Natural killer cell (primary cell): ENCODE measurements at regions of chr13 and their contacts with region 1.

Region 1: GRCh38 chr13:41652727-41653361 is 195.5 kb downstream of the RGCC start:
- DNase-seq: peak in 1 of 2 donors; percentile 74
- ATAC-seq: peak in 1 of 3 donors; percentile 34
- H3K4me3 ChIP-seq: no peak overlapping the region
- H3K4me3 Mint-ChIP-seq: no peak overlapping the region
- H3K27ac ChIP-seq: no peak overlapping the region
- H3K27ac Mint-ChIP-seq: no peak overlapping the region
- H3K4me1 ChIP-seq: no peaks in the 10 kb centered on the region
- H3K4me1 Mint-ChIP-seq: no peaks in the 10 kb centered on the region
- H3K27me3 ChIP-seq: no peaks in the 10 kb centered on the region
- H3K27me3 Mint-ChIP-seq: no peaks in the 10 kb centered on the region
- CTCF ChIP-seq: peak; percentile 28

Region 2: GRCh38 chr13:41352935-41353840 is 299.7 kb before region 1 on chr13:
- intact Hi-C with region 1: loop called (anchors 1 kb)
- DNase-seq: peak; percentile 21 to 85
- ATAC-seq: peak; percentile 75 to 80 (median 75)
- H3K4me3 ChIP-seq: no peak overlapping the region
- H3K4me3 Mint-ChIP-seq: peak overlapping the region; percentile 42
- H3K27ac ChIP-seq: no peak overlapping the region
- H3K27ac Mint-ChIP-seq: peak overlapping the region; percentile 35 to 83
- H3K4me1 ChIP-seq: peaks cover 12% of the 10 kb centered on the region
- H3K4me1 Mint-ChIP-seq: peaks cover 30 to 32% of the 10 kb centered on the region in 2 donors
- H3K27me3 ChIP-seq: no peaks in the 10 kb centered on the region
- H3K27me3 Mint-ChIP-seq: no peaks in the 10 kb centered on the region
- CTCF ChIP-seq: peak; percentile 90

Region 3: DNA sequence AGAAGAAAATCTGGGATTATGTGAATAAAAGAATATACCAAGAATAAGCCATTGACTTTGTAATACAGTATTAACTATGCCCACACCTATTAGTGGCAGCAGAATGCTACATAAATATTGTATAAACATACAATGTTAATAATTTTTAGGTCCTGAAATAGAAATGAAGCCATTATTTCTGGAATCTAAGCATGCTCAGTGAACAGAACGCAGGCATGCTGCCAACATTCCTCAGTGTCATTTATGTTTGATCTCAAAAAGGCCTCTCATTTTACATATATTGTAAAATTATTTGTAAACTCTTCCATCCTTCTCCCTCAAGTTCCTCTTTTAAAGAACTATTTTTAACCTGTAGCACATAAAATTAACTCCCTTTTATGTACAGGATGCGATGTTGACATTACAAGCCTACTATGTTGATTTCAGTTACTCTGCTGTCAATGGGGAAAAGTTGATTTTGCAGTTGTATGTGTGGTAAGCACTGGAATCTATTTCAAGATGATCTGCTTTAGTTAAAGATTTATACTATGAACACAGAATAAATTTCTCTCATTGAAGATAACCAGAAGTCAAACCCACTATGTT is 189.3 kb after region 1 on chr13:
- intact Hi-C with region 1: no loop called
- DNase-seq: no peak
- ATAC-seq: no peak
- H3K4me3 ChIP-seq: no peak overlapping the region
- H3K4me3 Mint-ChIP-seq: no peak overlapping the region
- H3K27ac ChIP-seq: no peak overlapping the region
- H3K27ac Mint-ChIP-seq: no peak overlapping the region
- H3K4me1 ChIP-seq: no peaks in the 10 kb centered on the region
- H3K4me1 Mint-ChIP-seq: peaks cover 5 to 9% of the 10 kb centered on the region in 2 donors
- H3K27me3 ChIP-seq: no peaks in the 10 kb centered on the region
- H3K27me3 Mint-ChIP-seq: no peaks in the 10 kb centered on the region
- CTCF ChIP-seq: no peak